Activated CD4-positive, alpha-beta memory T cell treated with anti-CD3 and anti-CD28 coated beads for 36 hours (primary cell): ENCODE measurements at regions of chr15 and their contacts with region 1.

Region 1: GRCh38 chr15:25391971-25392721 is 46.7 kb downstream of the UBE3A start:
- DNase-seq: no peak
- H3K4me3 Mint-ChIP-seq: no peak overlapping the region
- H3K27ac Mint-ChIP-seq: no peak overlapping the region
- H3K4me1 Mint-ChIP-seq: peaks cover 29% of the 10 kb centered on the region
- H3K27me3 Mint-ChIP-seq: no peaks in the 10 kb centered on the region

Region 2: GRCh38 chr15:25329696-25330095 is 62.5 kb before region 1 on chr15:
- CTCF ChIA-PET with region 1: no interaction called
- POLR2A ChIA-PET with region 1: no interaction called
- intact Hi-C with region 1: loop called (anchors 10 kb)
- DNase-seq: no peak
- H3K4me3 Mint-ChIP-seq: no peak overlapping the region
- H3K27ac Mint-ChIP-seq: no peak overlapping the region
- H3K4me1 Mint-ChIP-seq: peaks cover 2% of the 10 kb centered on the region
- H3K27me3 Mint-ChIP-seq: no peaks in the 10 kb centered on the region

Region 3: DNA sequence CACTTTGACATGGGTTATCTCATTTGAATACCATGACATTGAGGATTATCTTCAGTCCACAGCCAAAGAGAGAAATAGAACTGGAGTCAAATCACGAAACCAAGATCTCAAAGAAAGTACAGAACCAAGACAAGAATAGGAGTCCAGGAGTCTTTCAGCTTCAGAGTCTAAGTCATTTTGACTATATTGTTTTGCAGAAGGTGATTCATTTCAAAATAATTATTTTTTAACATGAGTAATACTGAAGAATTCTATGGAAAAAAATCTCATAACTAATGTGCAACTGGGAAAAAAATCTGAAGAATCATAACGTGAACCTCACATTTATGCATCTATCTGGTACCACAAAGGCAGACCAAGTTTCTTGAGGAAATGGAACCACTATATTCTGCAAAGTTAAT is 13.6 kb before region 1 on chr15:
- CTCF ChIA-PET with region 1: interaction called, 3 read pairs
- POLR2A ChIA-PET with region 1: interaction called, 4 read pairs
- intact Hi-C with region 1: loop called (anchors 2 kb)
- DNase-seq: no peak
- H3K4me3 Mint-ChIP-seq: no peak overlapping the region
- H3K27ac Mint-ChIP-seq: no peak overlapping the region
- H3K4me1 Mint-ChIP-seq: peaks cover 41% of the 10 kb centered on the region
- H3K27me3 Mint-ChIP-seq: no peaks in the 10 kb centered on the region